CD4-positive, alpha-beta memory T cell (primary cell): ENCODE measurements at regions of chr12 and their contacts with region 1.

Region 1: GRCh38 chr12:109844983-109845823 is 12.0 kb upstream of the TRPV4 start:
- DNase-seq: peak; percentile 77 to 88 (median 80)
- H3K4me3 ChIP-seq: peak overlapping the region in 1 of 2 donors; percentile 43
- H3K4me3 Mint-ChIP-seq: peak overlapping the region; percentile 32 to 62 (median 51)
- H3K27ac ChIP-seq: no peak overlapping the region
- H3K27ac Mint-ChIP-seq: peak overlapping the region in 2 of 7 donors; percentile 32 to 77
- H3K4me1 ChIP-seq: peaks cover 9% of the 10 kb centered on the region
- H3K4me1 Mint-ChIP-seq: peaks cover 4 to 10% (median 7%) of the 10 kb centered on the region in 4 donors
- H3K27me3 ChIP-seq: no peaks in the 10 kb centered on the region
- H3K27me3 Mint-ChIP-seq: no peaks in the 10 kb centered on the region

Region 2: GRCh38 chr12:109637348-109637747 is 207.9 kb before region 1 on chr12:
- CTCF ChIA-PET with region 1: no interaction called
- POLR2A ChIA-PET with region 1: no interaction called
- intact Hi-C with region 1: no loop called
- DNase-seq: no peak
- H3K4me3 ChIP-seq: no peak overlapping the region
- H3K4me3 Mint-ChIP-seq: no peak overlapping the region
- H3K27ac ChIP-seq: no peak overlapping the region
- H3K27ac Mint-ChIP-seq: no peak overlapping the region
- H3K4me1 ChIP-seq: no peaks in the 10 kb centered on the region
- H3K4me1 Mint-ChIP-seq: no peaks in the 10 kb centered on the region
- H3K27me3 ChIP-seq: no peaks in the 10 kb centered on the region
- H3K27me3 Mint-ChIP-seq: peaks cover 5 to 8% of the 10 kb centered on the region in 2 donors

Region 3: GRCh38 chr12:109804820-109805761 is 40.1 kb before region 1 on chr12:
- CTCF ChIA-PET with region 1: interaction called, 86 read pairs
- POLR2A ChIA-PET with region 1: no interaction called
- intact Hi-C with region 1: loop called (anchors 1 kb)
- DNase-seq: peak; percentile 58 to 69 (median 61)
- H3K4me3 ChIP-seq: no peak overlapping the region
- H3K4me3 Mint-ChIP-seq: no peak overlapping the region
- H3K27ac ChIP-seq: no peak overlapping the region
- H3K27ac Mint-ChIP-seq: peak overlapping the region in 4 of 7 donors; percentile 17 to 65 (median 41)
- H3K4me1 ChIP-seq: no peaks in the 10 kb centered on the region
- H3K4me1 Mint-ChIP-seq: peaks cover 0 to 1% (median 0%) of the 10 kb centered on the region in 4 donors
- H3K27me3 ChIP-seq: no peaks in the 10 kb centered on the region
- H3K27me3 Mint-ChIP-seq: peaks cover 0 to 1% of the 10 kb centered on the region in 2 donors

Region 4: GRCh38 chr12:109828236-109828550 is 17.0 kb before region 1 on chr12:
- CTCF ChIA-PET with region 1: interaction called, 44 read pairs
- POLR2A ChIA-PET with region 1: no interaction called
- intact Hi-C with region 1: no loop called
- DNase-seq: no peak
- H3K4me3 ChIP-seq: no peak overlapping the region
- H3K4me3 Mint-ChIP-seq: peak overlapping the region in 1 of 8 donors; percentile 18
- H3K27ac ChIP-seq: no peak overlapping the region
- H3K27ac Mint-ChIP-seq: no peak overlapping the region
- H3K4me1 ChIP-seq: no peaks in the 10 kb centered on the region
- H3K4me1 Mint-ChIP-seq: no peaks in the 10 kb centered on the region
- H3K27me3 ChIP-seq: no peaks in the 10 kb centered on the region
- H3K27me3 Mint-ChIP-seq: peaks cover 4 to 14% of the 10 kb centered on the region in 2 donors

Region 5: DNA sequence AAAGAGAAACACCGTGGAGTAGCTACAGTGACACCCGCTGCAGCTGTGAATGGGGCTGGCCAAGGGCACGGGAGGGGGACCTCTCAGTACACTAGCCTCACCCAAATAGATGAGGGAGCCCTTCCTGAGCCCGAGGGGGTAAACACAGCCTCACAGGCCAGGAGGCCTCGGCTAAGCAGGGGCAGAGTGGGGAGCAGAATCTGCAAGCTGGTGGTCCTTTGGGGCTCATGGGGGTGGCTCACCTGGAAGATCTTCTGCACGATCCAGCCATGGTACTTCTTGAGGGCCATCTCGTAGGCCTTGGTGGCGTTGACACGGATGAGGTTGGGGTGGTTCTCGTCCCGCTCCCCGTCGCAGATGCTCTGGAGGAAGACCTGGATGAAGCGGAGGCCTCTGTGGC is 10.2 kb after region 1 on chr12:
- CTCF ChIA-PET with region 1: interaction called, 36 read pairs
- POLR2A ChIA-PET with region 1: interaction called, 5 read pairs
- intact Hi-C with region 1: no loop called
- DNase-seq: no peak
- H3K4me3 ChIP-seq: no peak overlapping the region
- H3K4me3 Mint-ChIP-seq: no peak overlapping the region
- H3K27ac ChIP-seq: no peak overlapping the region
- H3K27ac Mint-ChIP-seq: no peak overlapping the region
- H3K4me1 ChIP-seq: no peaks in the 10 kb centered on the region
- H3K4me1 Mint-ChIP-seq: peaks cover 0 to 3% (median 2%) of the 10 kb centered on the region in 4 donors
- H3K27me3 ChIP-seq: no peaks in the 10 kb centered on the region
- H3K27me3 Mint-ChIP-seq: no peaks in the 10 kb centered on the region

Region 6: GRCh38 chr12:109861689-109862314 is 16.6 kb after region 1 on chr12:
- CTCF ChIA-PET with region 1: interaction called, 36 read pairs
- POLR2A ChIA-PET with region 1: interaction called, 5 read pairs
- intact Hi-C with region 1: no loop called
- DNase-seq: no peak
- H3K4me3 ChIP-seq: no peak overlapping the region
- H3K4me3 Mint-ChIP-seq: no peak overlapping the region
- H3K27ac ChIP-seq: no peak overlapping the region
- H3K27ac Mint-ChIP-seq: peak overlapping the region in 2 of 7 donors; percentile 9 to 41
- H3K4me1 ChIP-seq: peaks cover 7% of the 10 kb centered on the region
- H3K4me1 Mint-ChIP-seq: peaks cover 9 to 30% (median 20%) of the 10 kb centered on the region in 4 donors
- H3K27me3 ChIP-seq: no peaks in the 10 kb centered on the region
- H3K27me3 Mint-ChIP-seq: no peaks in the 10 kb centered on the region

Region 7: DNA sequence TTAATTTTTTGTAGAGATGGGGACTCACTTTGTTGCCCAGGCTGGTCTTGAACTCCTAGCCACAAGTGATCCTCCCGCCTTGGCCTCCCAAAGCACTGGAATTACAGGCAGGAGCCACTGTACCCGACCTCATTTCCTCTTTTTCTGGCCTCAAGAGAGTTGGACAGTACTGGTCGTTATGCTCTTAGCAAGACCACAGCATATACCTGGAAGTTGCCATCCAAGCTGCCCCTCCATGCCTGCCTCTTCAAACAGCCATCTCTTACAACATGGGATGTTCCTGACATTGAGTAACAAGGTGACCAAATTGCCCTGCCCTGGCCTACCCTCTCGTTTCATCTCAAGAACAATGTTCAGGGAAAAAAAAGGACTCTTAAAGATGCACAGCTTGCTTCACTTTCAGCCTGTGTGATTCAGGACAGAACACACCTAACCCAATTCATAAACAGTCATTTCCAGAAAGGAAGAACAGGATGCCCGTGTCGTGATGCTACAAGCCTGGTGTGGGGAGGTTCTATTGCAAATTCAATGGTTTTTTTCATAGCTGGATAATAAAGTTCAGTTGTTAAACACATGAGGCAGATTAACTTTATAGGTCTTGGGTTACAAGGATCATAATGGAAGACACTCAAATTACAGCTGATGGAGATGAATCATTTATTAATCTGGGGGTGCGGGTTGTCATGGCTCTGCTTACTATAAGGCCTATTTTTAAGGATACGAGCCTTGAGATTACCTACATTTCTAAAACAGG is 23.2 kb after region 1 on chr12:
- CTCF ChIA-PET with region 1: interaction called, 12 read pairs
- POLR2A ChIA-PET with region 1: no interaction called
- intact Hi-C with region 1: no loop called
- DNase-seq: no peak
- H3K4me3 ChIP-seq: no peak overlapping the region
- H3K4me3 Mint-ChIP-seq: no peak overlapping the region
- H3K27ac ChIP-seq: no peak overlapping the region
- H3K27ac Mint-ChIP-seq: peak overlapping the region in 5 of 7 donors; percentile 2 to 44 (median 17)
- H3K4me1 ChIP-seq: peaks cover 7% of the 10 kb centered on the region
- H3K4me1 Mint-ChIP-seq: peaks cover 15 to 41% (median 32%) of the 10 kb centered on the region in 4 donors
- H3K27me3 ChIP-seq: no peaks in the 10 kb centered on the region
- H3K27me3 Mint-ChIP-seq: no peaks in the 10 kb centered on the region

Region 8: GRCh38 chr12:110245369-110245772 is 400.2 kb after region 1 on chr12:
- CTCF ChIA-PET with region 1: no interaction called
- POLR2A ChIA-PET with region 1: no interaction called
- intact Hi-C with region 1: loop called (anchors 5 kb)
- DNase-seq: peak in 4 of 5 donors; percentile 28 to 44 (median 35)
- H3K4me3 ChIP-seq: no peak overlapping the region
- H3K4me3 Mint-ChIP-seq: no peak overlapping the region
- H3K27ac ChIP-seq: no peak overlapping the region
- H3K27ac Mint-ChIP-seq: peak overlapping the region in 1 of 7 donors; percentile 56
- H3K4me1 ChIP-seq: no peaks in the 10 kb centered on the region
- H3K4me1 Mint-ChIP-seq: no peaks in the 10 kb centered on the region
- H3K27me3 ChIP-seq: no peaks in the 10 kb centered on the region
- H3K27me3 Mint-ChIP-seq: peaks cover 0 to 6% of the 10 kb centered on the region in 2 donors